ENCODE measurements at regions of chr16 and their contacts with region 1.

Region 1: GRCh38 chr16:58797137-58797801 is 63.2 kb upstream of the GOT2 start:
- DNase-seq: no peak
- H3K4me3 Mint-ChIP-seq: no peak overlapping the region
- H3K27ac Mint-ChIP-seq: no peak overlapping the region
- H3K4me1 Mint-ChIP-seq: no peaks in the 10 kb centered on the region
- H3K27me3 Mint-ChIP-seq: peaks cover 14% of the 10 kb centered on the region
- CTCF ChIP-seq: no peak

Region 2: DNA sequence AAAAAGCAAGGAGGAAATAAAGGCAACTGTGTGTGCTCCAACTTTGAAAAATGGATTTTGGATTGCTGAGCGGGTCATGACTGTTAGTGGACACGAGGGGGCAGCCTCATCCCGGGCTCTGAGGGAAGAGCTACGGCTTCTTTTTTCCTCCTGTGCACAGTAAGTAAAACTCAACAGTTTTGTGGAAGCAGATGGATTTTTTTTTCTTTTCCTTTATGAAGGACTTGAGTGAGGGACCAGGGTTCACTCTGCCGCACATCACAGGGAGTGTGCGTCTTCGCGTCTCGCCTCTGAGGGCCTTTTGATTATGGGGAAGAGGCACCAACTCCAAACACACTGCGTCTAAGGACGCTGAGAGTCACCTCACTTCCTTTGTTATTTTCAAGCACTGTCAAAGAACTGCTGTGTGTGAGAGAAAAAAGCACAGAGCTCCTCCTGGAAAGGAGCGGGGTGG is 17.1 kb after region 1 on chr16:
- CTCF ChIA-PET with region 1: interaction called, 10 read pairs
- POLR2A ChIA-PET with region 1: interaction called, 3 read pairs
- intact Hi-C with region 1: no loop called
- DNase-seq: peak; percentile 49
- H3K4me3 Mint-ChIP-seq: peak overlapping the region; percentile 55
- H3K27ac Mint-ChIP-seq: no peak overlapping the region
- H3K4me1 Mint-ChIP-seq: peaks cover 8% of the 10 kb centered on the region
- H3K27me3 Mint-ChIP-seq: no peaks in the 10 kb centered on the region
- CTCF ChIP-seq: peak; percentile 86